ENCODE measurements at regions of chr5 and their contacts with region 1.

Region 1: DNA sequence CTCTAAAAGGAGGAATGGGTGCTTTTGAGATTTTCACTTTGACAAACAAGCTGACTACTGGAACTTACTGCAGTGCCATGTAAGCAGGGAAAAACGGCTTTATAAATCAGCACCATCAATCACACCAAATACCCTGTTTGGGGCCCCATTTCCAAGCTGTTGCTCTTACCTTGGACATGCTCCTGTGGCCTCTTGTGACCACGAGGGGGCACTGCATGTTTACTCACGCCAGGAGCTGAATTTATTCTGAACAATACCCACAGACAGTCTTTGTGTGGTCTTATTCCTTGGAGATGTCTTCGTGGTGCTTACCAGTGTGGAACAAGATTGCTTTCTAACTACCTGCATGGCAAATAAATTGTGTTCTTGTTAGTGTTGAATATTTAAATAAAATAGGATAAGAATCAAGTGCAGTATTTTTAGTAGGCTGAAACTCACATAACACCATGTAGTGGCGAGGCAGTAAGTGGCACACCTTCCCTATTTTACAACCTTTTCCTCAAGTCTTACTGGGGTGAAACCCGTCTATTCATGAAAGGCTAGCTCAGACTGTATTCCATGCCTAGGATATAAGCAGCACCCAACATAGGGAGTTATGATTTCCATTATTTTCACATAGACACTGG is 155.5 kb upstream of the NMUR2 start:
- DNase-seq: peak; percentile 74
- ATAC-seq: peak; percentile 75

Region 2: GRCh38 chr5:152488869-152489268 is 71.8 kb before region 1 on chr5:
- intact Hi-C with region 1: no loop called
- DNase-seq: no peak
- ATAC-seq: no peak

Region 3: GRCh38 chr5:153147891-153148623 is 587.4 kb after region 1 on chr5:
- intact Hi-C with region 1: loop called (anchors 5 kb)
- DNase-seq: no peak
- ATAC-seq: peak; percentile 68